Right cardiac atrium (tissue), 5 donors: ENCODE measurements at regions of chr19 and their contacts with region 1.

Region 1: DNA sequence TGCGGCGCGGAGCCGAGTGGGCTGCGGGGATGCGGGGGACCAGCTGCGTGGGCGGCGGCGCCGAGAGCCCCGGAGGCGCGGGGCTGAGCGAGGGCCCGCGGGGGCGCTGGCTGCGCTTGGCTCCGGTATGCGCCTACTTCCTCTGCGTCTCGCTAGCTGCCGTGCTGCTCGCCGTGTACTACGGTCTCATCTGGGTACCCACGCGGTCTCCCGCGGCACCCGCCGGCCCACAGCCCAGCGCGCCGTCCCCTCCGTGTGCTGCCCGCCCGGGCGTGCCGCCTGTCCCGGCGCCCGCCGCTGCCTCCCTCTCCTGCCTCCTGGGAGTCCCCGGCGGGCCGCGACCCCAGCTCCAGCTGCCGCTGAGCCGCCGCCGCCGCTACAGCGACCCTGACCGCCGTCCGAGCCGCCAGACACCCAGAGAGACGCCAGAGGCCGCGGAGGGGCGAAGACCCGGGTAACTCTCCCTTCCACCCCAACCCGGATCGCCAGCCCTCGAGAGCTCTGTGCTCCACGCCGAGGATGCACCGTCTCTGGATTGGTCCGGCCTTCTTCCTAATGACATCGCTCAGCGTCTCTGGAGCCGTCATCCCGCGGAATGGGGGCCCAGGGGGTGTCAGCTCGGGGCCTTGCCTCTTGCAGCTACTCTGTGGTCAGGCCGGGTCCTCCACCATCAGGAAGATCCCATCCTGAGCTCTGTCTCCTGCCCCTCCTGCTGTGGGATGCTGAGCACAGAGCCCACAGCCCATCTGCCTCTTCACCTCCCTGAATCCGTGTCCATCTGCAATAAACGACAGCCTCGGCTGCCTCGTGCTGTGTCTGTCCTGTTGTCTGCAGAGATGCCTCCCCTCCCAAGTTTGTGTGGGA is 438 bp downstream of the INAFM1 start:
- DNase-seq: peak in 2 of 3 donors; percentile 63 to 79
- ATAC-seq: peak; percentile 0 to 1
- H3K4me3 ChIP-seq: peak overlapping the region; percentile 61
- H3K27ac ChIP-seq: peak overlapping the region; percentile 27
- H3K4me1 ChIP-seq: no peaks in the 10 kb centered on the region
- H3K27me3 ChIP-seq: no peaks in the 10 kb centered on the region

Region 2: GRCh38 chr19:47157431-47158321 is 117.4 kb before region 1 on chr19:
- intact Hi-C with region 1: no loop called
- DNase-seq: peak; percentile 66 to 77 (median 74)
- ATAC-seq: peak; percentile 78 to 94
- H3K4me3 ChIP-seq: no peak overlapping the region
- H3K27ac ChIP-seq: peak overlapping the region; percentile 87
- H3K4me1 ChIP-seq: peaks cover 21% of the 10 kb centered on the region
- H3K27me3 ChIP-seq: no peaks in the 10 kb centered on the region

Region 3: GRCh38 chr19:47256688-47257443 is 18.3 kb before region 1 on chr19:
- intact Hi-C with region 1: no loop called
- DNase-seq: peak; percentile 100
- ATAC-seq: peak; percentile 87 to 90
- H3K4me3 ChIP-seq: peak overlapping the region; percentile 86
- H3K27ac ChIP-seq: peak overlapping the region; percentile 96
- H3K4me1 ChIP-seq: peaks cover 4% of the 10 kb centered on the region
- H3K27me3 ChIP-seq: no peaks in the 10 kb centered on the region

Region 4: GRCh38 chr19:47600246-47601179 is 325.4 kb after region 1 on chr19:
- intact Hi-C with region 1: no loop called
- DNase-seq: peak; percentile 100
- ATAC-seq: peak; percentile 99
- H3K4me3 ChIP-seq: peak overlapping the region; percentile 81
- H3K27ac ChIP-seq: peak overlapping the region; percentile 97
- H3K4me1 ChIP-seq: peaks cover 2% of the 10 kb centered on the region
- H3K27me3 ChIP-seq: no peaks in the 10 kb centered on the region

Region 5: GRCh38 chr19:47707135-47707925 is 432.2 kb after region 1 on chr19:
- intact Hi-C with region 1: loop called in 1 of 4 experiments (anchors 5 kb)
- DNase-seq: peak; percentile 72 to 84 (median 83)
- ATAC-seq: peak; percentile 80 to 82
- H3K4me3 ChIP-seq: no peak overlapping the region
- H3K27ac ChIP-seq: no peak overlapping the region
- H3K4me1 ChIP-seq: no peaks in the 10 kb centered on the region
- H3K27me3 ChIP-seq: no peaks in the 10 kb centered on the region